Naive thymus-derived CD4-positive, alpha-beta T cell (primary cell): ENCODE measurements at regions of chr11 and their contacts with region 1.

Region 1: GRCh38 chr11:13210424-13210823 is 67.2 kb upstream of the BMAL1 start:
- DNase-seq: peak in 3 of 9 donors; percentile 7 to 9 (median 8)
- ATAC-seq: no peak
- H3K4me3 ChIP-seq: no peak overlapping the region
- H3K4me3 Mint-ChIP-seq: no peak overlapping the region
- H3K27ac ChIP-seq: no peak overlapping the region
- H3K27ac Mint-ChIP-seq: peak overlapping the region in 1 of 9 donors; percentile 32
- H3K4me1 ChIP-seq: peaks cover 0 to 6% of the 10 kb centered on the region in 2 donors
- H3K4me1 Mint-ChIP-seq: peaks cover 16 to 33% (median 23%) of the 10 kb centered on the region in 7 donors
- H3K27me3 ChIP-seq: no peaks in the 10 kb centered on the region
- H3K27me3 Mint-ChIP-seq: peaks cover 0 to 3% (median 0%) of the 10 kb centered on the region in 5 donors

Region 2: GRCh38 chr11:13238879-13239514 is 28.6 kb after region 1 on chr11:
- CTCF ChIA-PET with region 1: interaction called, 4 read pairs
- POLR2A ChIA-PET with region 1: interaction called, 3 read pairs
- intact Hi-C with region 1: loop called in 1 of 2 experiments (anchors 1 kb)
- DNase-seq: peak; percentile 11 to 59 (median 43)
- ATAC-seq: peak; percentile 84
- H3K4me3 ChIP-seq: no peak overlapping the region
- H3K4me3 Mint-ChIP-seq: no peak overlapping the region
- H3K27ac ChIP-seq: no peak overlapping the region
- H3K27ac Mint-ChIP-seq: no peak overlapping the region
- H3K4me1 ChIP-seq: no peaks in the 10 kb centered on the region
- H3K4me1 Mint-ChIP-seq: peaks cover 0 to 5% (median 0%) of the 10 kb centered on the region in 7 donors
- H3K27me3 ChIP-seq: no peaks in the 10 kb centered on the region
- H3K27me3 Mint-ChIP-seq: peaks cover 0 to 45% (median 15%) of the 10 kb centered on the region in 5 donors

Region 3: DNA sequence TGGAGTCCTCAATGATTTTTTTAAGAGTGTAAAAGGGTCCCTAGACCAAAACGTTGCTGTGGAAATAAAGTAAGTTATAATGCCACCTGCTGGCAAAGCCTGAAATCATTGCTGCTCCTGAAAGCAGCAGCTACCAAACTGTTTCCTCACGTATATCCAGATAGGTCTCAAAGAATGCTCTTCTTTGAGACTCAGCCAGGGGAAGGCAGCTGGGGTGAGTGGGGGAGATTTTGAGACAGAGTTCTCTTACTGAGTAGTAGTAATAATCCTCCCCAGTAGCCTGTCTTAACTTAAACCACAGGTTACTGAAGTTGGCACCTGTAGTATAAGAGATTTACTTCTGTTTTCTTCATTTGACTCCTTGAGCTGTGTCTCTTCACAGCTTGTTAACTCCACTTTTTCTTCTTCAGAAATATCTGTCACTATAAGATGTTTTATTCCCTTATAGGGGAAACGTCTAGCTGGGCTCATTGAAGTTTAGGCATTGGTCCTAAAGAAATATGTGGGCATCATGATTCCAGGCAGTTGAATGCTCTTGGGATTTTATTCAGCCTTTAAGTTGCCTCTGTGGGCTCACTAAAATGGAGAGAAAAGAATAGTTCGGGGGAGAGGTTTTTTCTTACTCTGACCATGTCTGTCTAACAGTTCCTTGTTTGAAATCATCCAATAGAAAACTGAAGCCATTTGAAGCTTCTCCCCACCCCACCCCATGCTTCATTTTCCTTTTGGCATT is 174.7 kb after region 1 on chr11:
- CTCF ChIA-PET with region 1: no interaction called
- POLR2A ChIA-PET with region 1: no interaction called
- intact Hi-C with region 1: loop called in 1 of 2 experiments (anchors 1 kb)
- DNase-seq: peak in 5 of 9 donors; percentile 5 to 22 (median 10)
- ATAC-seq: peak; percentile 46
- H3K4me3 ChIP-seq: no peak overlapping the region
- H3K4me3 Mint-ChIP-seq: no peak overlapping the region
- H3K27ac ChIP-seq: no peak overlapping the region
- H3K27ac Mint-ChIP-seq: peak overlapping the region in 8 of 9 donors; percentile 3 to 80 (median 46)
- H3K4me1 ChIP-seq: no peaks in the 10 kb centered on the region
- H3K4me1 Mint-ChIP-seq: peaks cover 0 to 8% (median 0%) of the 10 kb centered on the region in 7 donors
- H3K27me3 ChIP-seq: no peaks in the 10 kb centered on the region
- H3K27me3 Mint-ChIP-seq: no peaks in the 10 kb centered on the region